ENCODE measurements at regions of chr16 and their contacts with region 1.

Region 1: DNA sequence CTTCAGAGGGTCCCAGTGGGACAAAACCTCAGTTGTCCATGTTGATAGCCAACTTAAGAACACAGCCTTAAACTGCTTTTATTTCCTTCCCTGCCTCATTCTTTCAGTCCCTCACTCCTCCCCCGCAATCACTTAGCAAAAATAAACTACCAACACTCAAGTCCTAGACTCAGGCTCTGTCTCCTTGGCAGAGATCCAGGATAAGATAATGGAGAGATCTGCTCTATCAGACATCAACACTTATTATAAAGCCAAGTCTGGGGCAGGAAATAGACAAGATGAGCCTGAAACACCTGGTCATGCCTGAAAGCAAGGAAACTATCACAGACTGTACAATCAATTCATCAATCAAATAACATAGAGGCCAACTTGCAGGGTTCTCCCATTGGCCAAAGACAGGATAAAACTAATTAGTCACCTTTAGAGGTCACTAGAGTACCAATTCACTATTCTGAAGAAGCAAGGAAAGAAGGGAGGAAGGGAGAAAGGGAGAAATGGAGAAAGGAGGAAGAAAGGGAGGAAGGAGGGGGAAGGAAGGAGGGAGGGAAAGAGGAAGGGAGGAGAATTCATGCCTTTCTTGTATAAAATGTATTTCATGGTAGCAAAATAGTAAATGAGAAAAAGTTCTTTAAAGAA is 15.7 kb downstream of the HYDIN start:
- DNase-seq: no peak
- H3K4me3 ChIP-seq: no peak overlapping the region
- H3K27ac ChIP-seq: no peak overlapping the region
- H3K4me1 ChIP-seq: no peaks in the 10 kb centered on the region
- H3K27me3 ChIP-seq: no peaks in the 10 kb centered on the region
- CTCF ChIP-seq: no peak
- EP300 ChIP-seq: no peak
- POLR2A ChIP-seq: no peak

Region 2: DNA sequence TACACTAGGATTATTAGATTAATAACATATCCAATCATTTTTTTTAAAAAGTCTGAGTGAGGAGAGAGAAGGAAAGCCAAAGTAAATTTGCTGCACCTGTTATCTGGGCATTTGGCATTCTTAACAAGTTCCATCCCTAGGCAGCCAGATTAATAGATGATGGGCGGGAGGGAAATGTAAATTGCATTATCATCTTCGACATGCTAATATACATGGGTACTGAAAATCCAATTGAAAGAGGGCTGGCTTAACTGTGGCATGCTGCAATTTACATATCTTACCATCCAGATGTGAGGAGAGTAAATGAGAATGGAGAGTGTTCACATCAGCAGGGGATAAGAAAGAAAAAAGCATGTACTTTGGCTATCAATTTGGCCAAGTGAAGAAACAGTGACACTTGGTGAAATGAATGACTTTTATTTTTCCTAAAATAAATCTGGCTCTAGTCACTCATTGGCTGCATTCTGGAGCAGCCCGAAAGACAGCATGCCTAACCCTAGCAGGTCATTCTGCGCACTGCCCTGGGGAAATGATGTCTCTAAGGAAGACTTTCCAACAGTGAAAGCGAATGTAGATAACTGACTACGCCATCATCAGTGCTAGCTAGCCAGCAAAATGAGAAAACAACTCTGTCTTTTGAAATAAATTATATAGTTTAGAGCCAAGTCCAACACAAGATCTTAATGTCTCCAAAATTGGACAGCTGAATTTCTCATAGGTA is 42.2 kb before region 1 on chr16:
- intact Hi-C with region 1: no loop called
- DNase-seq: no peak
- H3K4me3 ChIP-seq: no peak overlapping the region
- H3K27ac ChIP-seq: no peak overlapping the region
- H3K4me1 ChIP-seq: no peaks in the 10 kb centered on the region
- H3K27me3 ChIP-seq: no peaks in the 10 kb centered on the region
- CTCF ChIP-seq: no peak
- EP300 ChIP-seq: no peak
- POLR2A ChIP-seq: no peak

Region 3: DNA sequence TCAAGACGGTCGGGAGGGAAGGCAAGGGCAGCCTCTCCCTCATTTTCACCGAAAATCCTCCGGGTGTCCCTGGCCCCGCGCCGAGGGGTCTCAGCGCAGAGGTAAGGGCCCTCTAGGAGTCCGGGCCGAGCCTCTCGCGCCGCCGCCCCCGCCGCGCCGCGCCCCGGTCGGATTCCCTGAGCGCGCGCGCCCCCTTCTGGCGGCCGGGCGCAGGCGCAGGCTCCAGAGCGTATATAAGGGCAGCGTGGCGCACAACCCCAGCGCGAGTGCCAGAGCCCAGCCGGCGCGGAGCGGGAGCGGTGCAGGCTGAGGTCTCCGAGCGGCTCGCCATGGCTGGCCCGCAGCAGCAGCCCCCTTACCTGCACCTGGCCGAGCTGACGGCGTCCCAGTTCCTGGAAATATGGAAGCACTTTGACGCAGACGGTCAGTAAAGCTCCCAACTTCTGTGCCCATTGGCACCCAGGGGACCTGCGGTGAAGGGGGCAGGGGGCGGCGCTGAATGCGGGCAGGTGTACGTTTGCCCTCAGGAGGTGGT is 143.7 kb after region 1 on chr16 and contains the start of gene CALB2:
- intact Hi-C with region 1: loop called (anchors 10 kb)
- DNase-seq: peak; percentile 77
- H3K4me3 ChIP-seq: peak within 1 kb of the TSS in 3 of 4 donors; percentile 23 to 38 (median 31)
- H3K27ac ChIP-seq: no peak within 1 kb of the TSS
- H3K4me1 ChIP-seq: peaks cover 0 to 14% (median 12%) of the 10 kb centered on the region in 4 donors
- H3K27me3 ChIP-seq: peaks cover 0 to 31% (median 23%) of the 10 kb centered on the region in 3 donors
- CTCF ChIP-seq: peak in 1 of 4 experiments; percentile 97
- EP300 ChIP-seq: no peak
- POLR2A ChIP-seq: no peak
- total RNA-seq, gene CALB2: 3.3 to 8.2 (median 5.2) TPM

Measured in sigmoid colon (tissue), 7 donors.